Mucosa of descending colon (tissue), 3 donors: ENCODE measurements at regions of chr14 and their contacts with region 1.

Region 1: DNA sequence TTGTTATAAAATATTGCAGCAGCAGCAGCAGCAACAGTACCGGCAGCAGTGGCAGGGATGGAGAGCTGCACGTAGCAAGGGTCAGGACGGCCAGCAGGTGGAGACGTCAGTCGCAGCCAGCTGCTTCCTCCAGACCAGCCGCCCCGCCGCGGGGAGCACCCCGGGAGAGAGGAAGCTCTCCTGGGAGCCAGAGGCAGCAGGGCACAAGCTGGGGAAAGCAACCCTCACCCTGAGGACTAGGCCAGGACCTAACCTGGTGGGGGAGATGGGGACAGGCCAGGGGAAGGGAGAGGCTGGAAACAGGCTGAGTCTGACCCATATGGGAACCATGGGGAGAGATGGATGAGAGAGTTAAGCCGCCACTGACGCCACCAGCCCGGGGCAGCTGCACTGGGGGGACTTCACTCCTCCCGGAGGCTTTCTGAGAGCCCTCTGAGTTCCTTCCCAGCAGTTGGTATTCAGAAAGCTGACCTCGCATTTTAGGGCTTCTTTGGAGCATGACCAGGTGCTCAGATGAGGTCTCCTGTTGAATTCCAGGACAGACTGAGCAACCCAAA is 56.3 kb downstream of the SPTB start:
- DNase-seq: peak; percentile 73 to 85 (median 80)
- ATAC-seq: peak; percentile 96
- H3K4me3 ChIP-seq: no peak overlapping the region
- H3K4me1 ChIP-seq: no peaks in the 10 kb centered on the region
- CTCF ChIP-seq: peak; percentile 68

Region 2: GRCh38 chr14:64778104-64778754 is 45.2 kb before region 1 on chr14:
- intact Hi-C with region 1: no loop called
- DNase-seq: no peak
- ATAC-seq: no peak
- H3K4me3 ChIP-seq: no peak overlapping the region
- H3K4me1 ChIP-seq: no peaks in the 10 kb centered on the region
- CTCF ChIP-seq: no peak

Region 3: GRCh38 chr14:64880221-64881121 is 57.1 kb after region 1 on chr14:
- intact Hi-C with region 1: loop called in 1 of 2 experiments (anchors 10 kb)
- DNase-seq: peak; percentile 50 to 63 (median 55)
- ATAC-seq: peak; percentile 79
- H3K4me3 ChIP-seq: peak overlapping the region; percentile 14
- H3K4me1 ChIP-seq: peaks cover 10% of the 10 kb centered on the region
- CTCF ChIP-seq: no peak

Region 4: DNA sequence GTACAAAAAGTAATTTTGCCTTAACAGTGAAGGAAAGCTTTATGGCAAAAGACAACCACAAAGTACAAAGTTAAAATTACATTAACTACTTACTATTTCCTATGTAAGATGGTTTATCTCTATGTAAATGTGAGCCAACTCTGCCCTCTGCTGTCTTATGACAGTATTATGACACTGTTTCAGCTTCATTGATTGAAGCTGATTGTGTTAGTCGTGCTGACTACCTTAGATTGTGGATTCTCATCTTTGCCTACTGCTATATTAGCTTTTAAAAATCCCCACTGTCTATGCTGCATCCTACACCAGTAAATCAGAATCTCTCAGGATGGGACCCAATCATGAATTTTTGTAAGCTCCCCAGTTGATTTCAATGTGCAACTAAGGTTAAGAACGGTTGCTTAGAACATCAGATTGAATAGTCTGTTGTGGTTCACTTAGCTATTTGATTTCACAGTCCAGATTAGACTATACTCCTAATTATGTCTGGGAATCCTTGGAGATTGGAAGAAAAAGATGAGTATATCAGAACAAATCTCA is 68.5 kb after region 1 on chr14:
- intact Hi-C with region 1: loop called (anchors 10 kb)
- DNase-seq: peak in 1 of 3 donors; percentile 67
- ATAC-seq: peak; percentile 78
- H3K4me3 ChIP-seq: no peak overlapping the region
- H3K4me1 ChIP-seq: no peaks in the 10 kb centered on the region
- CTCF ChIP-seq: no peak

Region 5: DNA sequence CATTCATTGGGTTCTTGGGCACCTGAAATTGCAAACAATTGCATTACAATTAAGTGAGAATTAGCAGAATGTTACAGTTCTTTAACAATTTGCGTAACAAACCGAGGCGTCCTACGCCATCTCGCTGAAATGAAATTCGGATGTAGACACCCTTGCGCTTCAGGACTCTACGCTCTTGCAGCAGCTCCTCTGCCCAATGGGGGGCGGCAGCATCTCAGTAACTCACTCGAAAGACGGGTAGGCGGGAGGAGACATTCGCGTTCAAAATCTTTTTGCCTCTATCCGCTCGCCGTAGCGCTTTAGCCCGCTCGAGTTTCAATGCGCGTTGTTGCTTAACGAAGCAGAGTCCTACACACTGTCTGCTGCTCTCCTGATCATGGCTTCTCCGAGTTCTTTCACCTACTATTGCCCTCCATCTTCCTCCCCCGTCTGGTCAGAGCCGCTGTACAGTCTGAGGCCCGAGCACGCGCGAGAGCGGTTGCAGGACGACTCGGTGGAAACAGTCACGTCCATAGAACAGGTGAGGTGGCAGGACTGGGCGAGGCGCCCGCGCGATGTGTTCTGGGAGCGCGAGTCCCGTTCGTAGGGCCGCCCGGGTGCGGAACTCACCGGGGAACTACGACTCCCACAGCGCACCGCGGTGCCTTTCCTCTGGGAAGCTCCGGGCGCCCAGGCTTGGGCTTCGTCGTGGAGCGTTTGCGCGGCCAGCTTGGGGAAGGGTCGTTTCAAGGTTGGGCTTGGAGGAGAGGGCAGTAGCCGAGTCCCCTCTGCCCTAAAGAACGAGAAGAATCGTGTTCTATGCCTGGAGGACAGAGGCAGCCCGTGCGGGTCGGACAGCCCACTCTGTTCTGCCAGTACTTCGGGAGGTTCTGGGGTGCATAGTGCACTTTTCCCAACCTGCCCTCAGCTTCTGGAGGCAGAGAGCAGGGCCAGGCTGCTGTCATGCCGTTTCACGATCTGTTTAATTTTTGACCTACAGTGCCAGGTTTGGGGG is 163.5 kb after region 1 on chr14 and contains the start of gene FNTB:
- intact Hi-C with region 1: loop called in 1 of 2 experiments (anchors 10 kb)
- DNase-seq: peak; percentile 97
- ATAC-seq: peak; percentile 98
- H3K4me3 ChIP-seq: peak within 1 kb of the TSS; percentile 47
- H3K4me1 ChIP-seq: peaks cover 16% of the 10 kb centered on the region
- CTCF ChIP-seq: peak; percentile 78
- total RNA-seq, gene FNTB: 14.5 to 18.3 (median 14.5) TPM